ENCODE measurements at regions of chr14 and their contacts with region 1.

Region 1: DNA sequence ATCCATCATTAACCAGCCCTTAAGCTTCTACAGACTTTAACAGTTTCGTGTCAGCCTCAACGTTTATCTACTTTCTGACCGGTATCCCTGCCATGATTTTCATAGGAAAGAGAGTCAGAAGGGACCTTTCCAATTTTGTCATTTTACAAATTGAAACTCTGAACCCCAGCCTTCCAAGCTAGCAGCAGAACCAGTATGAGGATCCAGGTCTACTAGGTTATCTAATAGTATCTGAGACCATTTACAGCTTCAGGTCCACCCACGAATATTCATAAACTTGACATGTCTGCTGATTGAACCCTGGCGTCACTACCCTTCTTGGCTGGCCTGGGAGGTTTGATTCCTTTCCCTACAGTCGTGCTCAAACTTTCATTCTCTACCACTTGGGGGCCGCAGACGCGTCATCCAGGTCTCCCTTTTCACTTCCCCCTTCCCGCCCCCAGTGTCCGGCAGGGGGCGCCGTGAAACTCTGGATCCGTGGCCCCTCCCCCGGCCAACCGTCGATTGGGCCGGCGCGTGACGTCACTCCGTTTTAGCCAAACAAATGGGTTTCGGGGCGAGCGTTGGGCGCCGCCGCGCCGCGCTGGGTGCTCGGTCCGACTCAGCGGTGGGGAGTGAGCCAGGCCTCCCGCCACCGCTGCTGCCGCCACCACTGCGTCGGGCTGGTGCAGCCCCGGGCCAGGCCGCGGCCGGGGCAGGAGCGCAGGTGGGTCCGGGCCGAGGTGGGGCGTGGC is at the start of gene FBXO34:
- DNase-seq: peak; percentile 99
- ATAC-seq: peak; percentile 94 to 95
- total RNA-seq, gene FBXO34: 18.8 to 23.8 TPM

Region 2: DNA sequence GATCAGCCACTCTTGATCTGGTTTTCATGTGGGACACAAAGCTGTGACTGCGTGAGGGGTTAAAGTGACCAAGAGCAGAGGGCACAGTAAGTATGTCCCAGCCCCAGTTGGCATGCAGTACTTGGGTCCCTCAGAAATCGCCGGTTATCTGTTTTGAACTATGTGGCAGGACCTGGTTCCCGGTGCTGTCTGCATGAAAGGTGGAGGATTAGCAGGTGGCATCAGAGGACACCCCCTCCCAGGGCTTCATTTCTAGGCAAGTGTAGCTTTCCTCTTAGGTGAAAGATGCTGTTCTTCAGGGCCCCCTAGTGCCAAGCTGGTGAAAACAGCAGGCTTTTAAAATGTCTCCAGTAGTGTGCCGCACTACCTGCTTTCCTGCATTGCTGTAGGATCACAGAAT is 83.5 kb after region 1 on chr14:
- intact Hi-C with region 1: loop called (anchors 2 to 5 kb)
- DNase-seq: peak; percentile 30
- ATAC-seq: peak; percentile 82 to 86

Region 3: DNA sequence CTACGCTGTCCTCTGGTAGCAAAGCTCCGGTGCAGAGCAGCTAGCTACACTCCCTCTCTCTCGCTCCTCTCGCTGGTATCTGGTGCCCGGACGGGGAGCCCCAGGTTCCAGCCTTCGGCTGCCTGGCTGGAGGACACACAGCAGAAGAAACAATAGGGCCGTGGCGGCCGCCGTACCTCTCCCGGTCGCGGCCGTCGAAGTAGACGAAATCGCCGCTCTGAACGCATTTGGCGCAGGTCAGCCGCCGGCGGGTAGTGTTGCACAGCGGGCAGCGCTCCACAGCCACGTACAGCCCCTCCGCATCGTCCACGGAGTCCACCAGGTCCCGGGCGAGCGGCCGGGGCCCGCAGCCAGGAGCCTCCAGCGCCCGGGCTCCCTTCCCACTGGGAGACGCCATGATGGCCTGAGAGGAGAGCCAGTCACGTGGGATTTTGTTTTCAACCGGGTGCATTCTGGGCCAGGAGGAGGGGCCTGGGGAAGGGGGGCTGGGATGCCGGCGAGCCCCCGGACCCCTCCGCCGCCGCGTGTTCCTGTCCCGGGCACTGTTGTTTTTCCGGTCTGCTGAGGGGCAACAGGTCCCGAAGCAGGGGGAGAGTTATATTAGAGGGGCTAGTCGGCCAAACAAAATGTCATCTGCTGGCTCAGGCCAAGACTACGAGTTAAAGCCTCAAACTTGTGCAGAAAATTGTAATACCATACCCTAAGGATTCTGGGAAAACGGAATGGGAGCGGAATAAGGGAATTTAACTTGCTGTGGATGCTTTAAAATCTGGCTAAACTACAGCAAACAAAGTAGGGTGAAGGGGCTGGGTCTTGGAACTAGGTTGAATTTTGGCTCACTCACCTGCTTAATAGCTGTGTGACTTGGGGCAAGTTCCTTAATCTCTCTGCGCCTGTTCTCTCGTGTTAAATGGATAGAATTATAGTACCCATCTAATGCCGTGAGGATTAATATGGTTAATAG is 140.7 kb after region 1 on chr14 and contains the start of gene ATG14:
- intact Hi-C with region 1: loop called in 1 of 2 experiments (anchors 5 kb)
- DNase-seq: peak; percentile 88
- ATAC-seq: peak; percentile 99 to 100
- total RNA-seq, gene ATG14: 6.8 to 8.5 TPM

Measured in left cardiac atrium (tissue), 4 donors.